Activated CD4-positive, alpha-beta T cell treated with anti-CD3 and anti-CD28 coated beads, Interleukin-2, amount 10 ng/mL, durations not matched to agents 24 days and 14 days (primary cell): ENCODE measurements at regions of chrX and their contacts with region 1.

Region 1: DNA sequence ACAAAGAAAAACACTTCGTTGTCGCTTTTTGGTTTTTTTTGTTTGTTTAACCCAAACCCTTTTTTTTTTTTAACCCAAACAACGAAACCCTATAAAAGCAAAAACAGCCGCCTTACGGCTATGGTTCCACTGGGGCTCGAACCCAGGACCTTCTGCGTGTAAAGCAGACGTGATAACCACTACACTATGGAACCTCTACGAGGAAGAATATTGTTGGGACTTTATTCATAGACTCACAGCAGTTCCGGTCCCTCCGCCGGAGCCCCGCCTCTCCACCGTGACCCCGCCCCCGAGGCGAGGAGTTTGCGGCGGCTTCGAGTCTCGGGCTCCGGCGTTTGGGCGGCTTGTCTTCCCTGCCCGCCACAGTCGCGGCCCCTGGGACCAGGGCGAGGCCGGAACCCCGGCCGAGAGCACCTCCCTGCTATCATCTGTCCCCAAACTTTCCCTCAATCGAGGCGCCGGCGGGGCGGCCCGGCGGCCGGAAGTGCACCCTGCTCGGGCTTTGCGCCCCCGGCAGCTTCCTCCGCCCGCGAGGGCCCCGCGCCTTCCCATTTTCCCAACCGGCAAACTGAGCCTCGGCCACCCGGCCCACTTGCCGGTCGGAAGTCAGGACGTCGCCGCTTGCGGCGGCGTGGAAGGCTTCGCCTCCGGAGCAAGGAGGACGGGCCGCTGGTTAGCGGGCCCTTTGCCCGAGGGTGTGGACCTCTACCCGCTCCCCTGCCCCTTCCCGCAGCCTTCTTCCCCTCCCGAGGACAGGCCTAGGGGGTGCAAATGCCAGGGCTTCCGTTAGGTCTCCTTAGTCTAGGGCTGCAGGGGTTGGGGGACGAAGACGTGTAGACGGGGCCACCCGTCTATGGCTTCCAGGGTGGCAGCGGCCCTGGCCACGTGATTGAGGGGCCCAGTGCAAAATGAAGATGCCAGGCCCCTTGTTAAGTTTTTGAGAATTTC is 3.2 kb upstream of the RS1 start:
- DNase-seq: peak; percentile 95
- H3K4me3 Mint-ChIP-seq: peak overlapping the region; percentile 79
- H3K27ac Mint-ChIP-seq: peak overlapping the region; percentile 67
- H3K4me1 Mint-ChIP-seq: peaks cover 2% of the 10 kb centered on the region
- H3K27me3 Mint-ChIP-seq: no peaks in the 10 kb centered on the region

Region 2: DNA sequence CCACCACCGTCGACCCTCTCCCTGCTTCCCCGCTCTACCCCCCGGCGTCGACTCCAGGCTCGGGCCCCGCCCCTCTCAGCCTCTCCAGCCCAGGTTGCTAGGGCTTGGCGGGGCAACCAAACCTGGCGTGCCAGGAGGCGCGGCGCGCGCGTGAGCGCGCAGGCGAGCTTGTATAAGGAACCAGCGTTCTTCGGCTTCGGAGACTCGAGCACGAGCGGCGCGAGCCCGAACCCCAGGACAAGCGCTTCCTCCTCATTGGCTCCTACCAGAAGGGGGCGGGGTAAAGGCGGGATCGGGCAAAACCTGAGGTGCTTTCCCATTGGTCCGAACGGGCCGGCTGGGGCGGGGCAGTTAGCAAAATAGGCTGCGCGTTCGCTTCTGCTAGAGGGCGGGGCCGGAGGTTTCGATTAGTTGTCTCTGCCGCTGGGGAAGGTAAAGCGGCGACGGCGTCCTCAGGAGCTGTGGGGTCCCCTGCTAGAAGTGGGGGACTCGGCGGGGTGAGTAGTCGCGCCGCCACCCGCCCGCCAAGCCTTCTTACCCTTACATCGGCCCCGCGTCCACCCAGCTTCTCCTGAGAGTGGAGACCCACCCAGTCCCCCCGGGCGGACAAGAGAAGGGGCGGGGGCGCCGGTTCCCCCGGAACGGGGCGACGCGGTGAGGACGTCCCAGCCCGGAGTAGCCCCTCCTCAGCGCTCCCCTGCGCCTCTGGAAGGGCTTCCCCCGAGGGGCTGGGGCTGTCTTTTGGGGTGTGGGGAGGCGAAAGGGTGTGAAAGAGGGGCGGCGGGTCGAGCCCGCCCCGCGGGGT is 249.7 kb before region 1 on chrX and contains the start of gene CDKL5:
- intact Hi-C with region 1: loop called (anchors 2 kb)
- DNase-seq: peak; percentile 98
- H3K4me3 Mint-ChIP-seq: peak within 1 kb of the TSS; percentile 89
- H3K27ac Mint-ChIP-seq: no peak within 1 kb of the TSS
- H3K4me1 Mint-ChIP-seq: peaks cover 9% of the 10 kb centered on the region
- H3K27me3 Mint-ChIP-seq: peaks cover 21% of the 10 kb centered on the region
- total RNA-seq, gene CDKL5: 0.23 and 0.43 TPM in 2 replicates

Region 3: GRCh38 chrX:18886344-18887161 is 211.5 kb after region 1 on chrX:
- intact Hi-C with region 1: loop called (anchors 1 kb)
- DNase-seq: peak; percentile 78
- H3K4me3 Mint-ChIP-seq: peak overlapping the region; percentile 85
- H3K27ac Mint-ChIP-seq: peak overlapping the region; percentile 91
- H3K4me1 Mint-ChIP-seq: peaks cover 19% of the 10 kb centered on the region
- H3K27me3 Mint-ChIP-seq: no peaks in the 10 kb centered on the region

Region 4: GRCh38 chrX:18984381-18985185 is 309.5 kb after region 1 on chrX:
- intact Hi-C with region 1: loop called (anchors 1 kb)
- DNase-seq: peak; percentile 94
- H3K4me3 Mint-ChIP-seq: peak overlapping the region; percentile 82
- H3K27ac Mint-ChIP-seq: peak overlapping the region; percentile 90
- H3K4me1 Mint-ChIP-seq: peaks cover 11% of the 10 kb centered on the region
- H3K27me3 Mint-ChIP-seq: no peaks in the 10 kb centered on the region

Region 5: DNA sequence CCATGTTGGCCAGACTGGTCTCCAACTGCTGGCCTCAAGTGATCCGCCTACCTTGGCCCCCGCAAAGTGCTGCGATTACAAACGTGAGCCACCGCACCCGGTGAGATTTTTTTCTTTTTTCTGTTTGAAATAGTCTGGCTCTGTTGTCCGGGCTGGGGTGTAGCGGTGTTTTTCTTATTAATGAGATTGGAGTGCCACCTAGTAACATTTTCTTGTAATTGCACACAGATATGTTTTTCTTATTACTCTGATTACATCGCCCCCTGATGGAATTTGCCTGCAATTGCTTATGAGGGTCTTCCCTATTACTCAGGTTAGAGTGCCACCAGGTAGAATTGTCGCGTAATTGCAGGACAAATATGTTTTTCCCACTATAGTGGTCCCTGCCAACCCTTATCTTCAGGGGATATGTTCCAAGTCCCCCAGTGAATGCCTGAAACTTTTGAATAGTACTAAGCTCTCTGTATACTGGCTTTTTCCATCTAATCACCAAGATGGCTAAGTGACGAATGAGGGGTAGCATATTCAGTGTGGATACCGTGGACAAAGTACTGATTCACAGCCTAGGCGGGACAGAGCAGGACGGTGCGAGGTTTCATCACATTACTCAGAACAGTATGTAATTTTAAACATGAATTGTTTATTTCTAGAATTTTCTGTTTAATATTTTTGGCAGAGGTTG is 660.0 kb after region 1 on chrX:
- intact Hi-C with region 1: loop called (anchors 10 kb)
- DNase-seq: peak; percentile 70
- H3K4me3 Mint-ChIP-seq: no peak overlapping the region
- H3K27ac Mint-ChIP-seq: no peak overlapping the region
- H3K4me1 Mint-ChIP-seq: no peaks in the 10 kb centered on the region
- H3K27me3 Mint-ChIP-seq: no peaks in the 10 kb centered on the region